Activated CD8-positive, alpha-beta T cell treated with anti-CD3 and anti-CD28 coated beads, Interleukin-2, amount 10 ng/mL, durations not matched to agents 7 days and 5 days (primary cell): ENCODE measurements at regions of chr11 and their contacts with region 1.

Region 1: DNA sequence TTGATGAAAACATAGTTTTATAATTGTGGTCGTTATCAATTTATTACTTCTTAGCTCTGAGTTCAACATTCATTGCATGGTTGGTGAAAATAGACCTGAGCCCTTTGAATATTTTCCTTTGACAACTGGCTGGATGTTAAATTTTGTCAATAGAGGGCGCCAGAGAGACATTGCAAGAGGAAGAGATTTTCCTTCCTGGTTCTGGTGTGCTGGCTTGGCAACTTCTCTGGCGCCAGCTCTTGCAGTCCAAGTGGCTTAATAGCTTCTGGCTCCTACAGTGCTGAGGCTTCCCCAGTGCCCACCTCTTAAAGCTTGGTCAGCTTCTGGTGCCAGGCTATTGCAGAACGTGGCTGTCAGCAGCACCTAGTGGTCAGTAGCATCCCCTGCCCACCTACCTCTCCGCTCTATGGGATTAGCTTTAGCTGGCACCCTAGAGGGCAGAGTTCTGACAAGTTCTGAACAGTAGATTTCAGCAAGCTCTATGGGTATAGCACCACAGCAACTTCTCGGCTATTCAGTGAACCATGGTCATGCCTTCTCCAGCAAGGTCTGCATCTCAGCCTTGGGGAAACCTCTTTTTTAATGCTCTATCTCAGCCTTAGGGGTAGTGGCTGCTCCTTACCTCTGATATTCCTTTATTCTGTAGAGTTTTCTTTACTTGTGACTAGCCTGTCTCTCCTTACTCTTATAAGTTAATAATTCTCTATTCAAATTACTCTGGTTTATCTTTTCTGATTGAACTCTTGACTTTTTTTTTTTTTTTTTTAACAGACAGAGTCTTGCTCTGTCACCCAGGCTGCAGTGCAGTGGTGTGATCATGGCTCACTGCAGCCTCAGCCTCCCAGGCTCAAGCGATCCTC is 59.4 kb downstream of the ACER3 start:
- DNase-seq: peak; percentile 83
- ATAC-seq: peak; percentile 83
- H3K4me3 Mint-ChIP-seq: no peak overlapping the region
- H3K27ac Mint-ChIP-seq: no peak overlapping the region
- H3K4me1 Mint-ChIP-seq: peaks cover 6% of the 10 kb centered on the region
- H3K27me3 Mint-ChIP-seq: peaks cover 4% of the 10 kb centered on the region

Region 2: GRCh38 chr11:76577199-76577920 is 342.8 kb before region 1 on chr11:
- CTCF ChIA-PET with region 1: no interaction called
- POLR2A ChIA-PET with region 1: no interaction called
- DNase-seq: no peak
- ATAC-seq: no peak
- H3K4me3 Mint-ChIP-seq: no peak overlapping the region
- H3K27ac Mint-ChIP-seq: no peak overlapping the region
- H3K4me1 Mint-ChIP-seq: no peaks in the 10 kb centered on the region
- H3K27me3 Mint-ChIP-seq: peaks cover 11% of the 10 kb centered on the region

Region 3: GRCh38 chr11:76799066-76799804 is 120.9 kb before region 1 on chr11:
- CTCF ChIA-PET with region 1: interaction called, 96 read pairs
- POLR2A ChIA-PET with region 1: no interaction called
- DNase-seq: peak; percentile 84
- ATAC-seq: peak; percentile 90
- H3K4me3 Mint-ChIP-seq: no peak overlapping the region
- H3K27ac Mint-ChIP-seq: no peak overlapping the region
- H3K4me1 Mint-ChIP-seq: peaks cover 26% of the 10 kb centered on the region
- H3K27me3 Mint-ChIP-seq: peaks cover 10% of the 10 kb centered on the region

Region 4: DNA sequence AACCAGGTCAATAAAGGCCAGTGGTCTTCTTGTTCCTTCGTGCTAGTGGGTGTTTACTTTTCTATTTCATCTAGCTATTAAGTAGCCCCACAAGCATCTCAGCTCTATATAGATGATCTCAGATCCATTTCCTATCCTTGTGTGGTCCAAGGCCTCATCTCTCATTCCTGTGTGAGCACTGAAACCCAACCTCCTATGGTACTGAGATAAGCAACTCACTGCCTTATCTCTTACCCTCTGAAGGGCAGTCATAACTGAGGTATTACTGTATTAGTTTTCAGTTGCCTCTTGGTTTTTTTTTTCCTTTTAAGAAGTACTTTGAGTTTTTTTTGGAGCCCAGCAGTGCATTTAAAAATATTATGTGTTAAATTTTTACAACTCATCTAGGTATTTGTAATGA is 31.1 kb before region 1 on chr11:
- CTCF ChIA-PET with region 1: interaction called, 25 read pairs
- POLR2A ChIA-PET with region 1: no interaction called
- DNase-seq: no peak
- ATAC-seq: no peak
- H3K4me3 Mint-ChIP-seq: no peak overlapping the region
- H3K27ac Mint-ChIP-seq: no peak overlapping the region
- H3K4me1 Mint-ChIP-seq: peaks cover 9% of the 10 kb centered on the region
- H3K27me3 Mint-ChIP-seq: no peaks in the 10 kb centered on the region

Region 5: GRCh38 chr11:76974179-76974891 is 54.2 kb after region 1 on chr11:
- CTCF ChIA-PET with region 1: interaction called, 16 read pairs
- POLR2A ChIA-PET with region 1: no interaction called
- DNase-seq: no peak
- ATAC-seq: no peak
- H3K4me3 Mint-ChIP-seq: no peak overlapping the region
- H3K27ac Mint-ChIP-seq: no peak overlapping the region
- H3K4me1 Mint-ChIP-seq: no peaks in the 10 kb centered on the region
- H3K27me3 Mint-ChIP-seq: no peaks in the 10 kb centered on the region

Region 6: GRCh38 chr11:77039491-77040400 is 119.6 kb after region 1 on chr11:
- CTCF ChIA-PET with region 1: interaction called, 32 read pairs
- POLR2A ChIA-PET with region 1: no interaction called
- DNase-seq: peak; percentile 44
- ATAC-seq: peak; percentile 80
- H3K4me3 Mint-ChIP-seq: no peak overlapping the region
- H3K27ac Mint-ChIP-seq: no peak overlapping the region
- H3K4me1 Mint-ChIP-seq: peaks cover 9% of the 10 kb centered on the region
- H3K27me3 Mint-ChIP-seq: peaks cover 44% of the 10 kb centered on the region